Pancreas (tissue), 10 donors: ENCODE measurements at regions of chr12 and their contacts with region 1.

Region 1: DNA sequence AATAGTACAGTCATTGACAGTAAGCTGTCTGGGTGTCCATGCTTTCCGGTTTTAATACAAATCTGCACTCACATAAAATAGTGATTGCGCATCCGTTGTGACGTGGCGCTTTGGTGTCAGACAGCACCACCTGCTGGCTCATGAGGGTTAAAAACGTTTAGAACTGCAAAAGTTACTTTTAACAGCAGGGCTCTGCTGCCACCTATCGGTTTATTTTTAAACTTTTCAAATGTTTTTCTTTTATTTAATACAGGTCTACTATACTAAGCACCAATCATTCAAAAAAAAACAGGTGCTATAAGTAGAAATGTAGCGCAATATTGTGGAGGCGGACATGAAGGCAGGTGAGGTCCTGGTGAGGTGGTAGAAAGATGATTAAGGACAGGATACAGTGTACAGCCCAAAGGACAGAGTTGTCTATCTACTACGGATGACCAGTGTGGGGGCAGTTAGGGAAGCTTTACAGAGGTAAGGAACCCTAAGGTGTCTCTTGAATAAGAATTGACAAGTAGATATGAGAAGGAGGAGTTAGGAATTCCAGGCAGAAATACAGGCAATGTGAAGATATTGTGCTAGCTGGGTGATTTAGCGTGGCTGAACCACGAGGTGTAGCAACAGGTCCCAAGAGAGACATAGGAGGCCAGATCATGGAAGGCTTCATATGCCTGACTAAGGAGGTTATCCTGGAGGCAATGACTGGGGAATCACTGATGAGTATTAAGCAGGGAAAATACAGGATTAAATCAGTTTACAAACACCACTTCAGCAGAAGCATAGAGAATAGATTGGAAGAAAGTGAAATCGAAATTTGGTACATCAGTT is 91.5 kb upstream of the PRB2 start:
- DNase-seq: peak in 5 of 6 donors; percentile 64 to 76 (median 72)
- ATAC-seq: peak; percentile 85 to 99 (median 98)
- H3K4me3 ChIP-seq: no peak overlapping the region
- H3K27ac ChIP-seq: no peak overlapping the region
- H3K4me1 ChIP-seq: no peaks in the 10 kb centered on the region
- H3K27me3 ChIP-seq: no peaks in the 10 kb centered on the region
- CTCF ChIP-seq: peak; percentile 83 to 97 (median 94)

Region 2: GRCh38 chr12:10771132-10771733 is 715.6 kb before region 1 on chr12:
- intact Hi-C with region 1: loop called in 2 of 3 experiments (anchors 10 kb)
- DNase-seq: no peak
- ATAC-seq: peak; percentile 73 to 85 (median 82)
- H3K4me3 ChIP-seq: no peak overlapping the region
- H3K27ac ChIP-seq: no peak overlapping the region
- H3K4me1 ChIP-seq: no peaks in the 10 kb centered on the region
- H3K27me3 ChIP-seq: peaks cover 0 to 9% (median 2%) of the 10 kb centered on the region in 4 donors
- CTCF ChIP-seq: peak in 3 of 4 donors; percentile 35 to 49 (median 40)

Region 3: GRCh38 chr12:11238275-11238674 is 248.6 kb before region 1 on chr12:
- intact Hi-C with region 1: loop called in 1 of 3 experiments (anchors 10 kb)
- DNase-seq: no peak
- ATAC-seq: no peak
- H3K4me3 ChIP-seq: no peak overlapping the region
- H3K27ac ChIP-seq: no peak overlapping the region
- H3K4me1 ChIP-seq: no peaks in the 10 kb centered on the region
- H3K27me3 ChIP-seq: no peaks in the 10 kb centered on the region
- CTCF ChIP-seq: no peak

Region 4: GRCh38 chr12:11545484-11546330 is 58.9 kb after region 1 on chr12:
- intact Hi-C with region 1: no loop called
- DNase-seq: no peak
- ATAC-seq: no peak
- H3K4me3 ChIP-seq: no peak overlapping the region
- H3K27ac ChIP-seq: no peak overlapping the region
- H3K4me1 ChIP-seq: no peaks in the 10 kb centered on the region
- H3K27me3 ChIP-seq: no peaks in the 10 kb centered on the region
- CTCF ChIP-seq: no peak